PC-3 (cell line): ENCODE measurements at regions of chr3 and their contacts with region 1.

Region 1: GRCh38 chr3:102673271-102674115 is 238.7 kb downstream of the ZPLD1 start:
- DNase-seq: peak; percentile 71
- ATAC-seq: peak; percentile 86
- H3K4me3 ChIP-seq: 0 out of 2 replicates have a peak overlapping the region, but pooled peaks have one; percentile 17
- H3K27ac ChIP-seq: no peak overlapping the region
- H3K4me1 ChIP-seq: no peaks in the 10 kb centered on the region
- H3K27me3 ChIP-seq: peaks cover 25% of the 10 kb centered on the region; the same call in 1 of the 2 replicates
- CTCF ChIP-seq: peak; percentile 96

Region 2: GRCh38 chr3:102586485-102586884 is 87.0 kb before region 1 on chr3:
- CTCF ChIA-PET with region 1: no interaction called
- POLR2A ChIA-PET with region 1: no interaction called
- intact Hi-C with region 1: no loop called
- DNase-seq: no peak
- ATAC-seq: no peak
- H3K4me3 ChIP-seq: no peak overlapping the region
- H3K27ac ChIP-seq: no peak overlapping the region
- H3K4me1 ChIP-seq: no peaks in the 10 kb centered on the region
- H3K27me3 ChIP-seq: peaks cover 43% of the 10 kb centered on the region
- CTCF ChIP-seq: no peak

Region 3: GRCh38 chr3:102741108-102741507 is 67.6 kb after region 1 on chr3:
- CTCF ChIA-PET with region 1: no interaction called
- POLR2A ChIA-PET with region 1: no interaction called
- intact Hi-C with region 1: loop called (anchors 5 kb)
- DNase-seq: peak; percentile 46
- ATAC-seq: peak; percentile 77
- H3K4me3 ChIP-seq: no peak overlapping the region
- H3K27ac ChIP-seq: no peak overlapping the region
- H3K4me1 ChIP-seq: no peaks in the 10 kb centered on the region
- H3K27me3 ChIP-seq: no peaks in the 10 kb centered on the region
- CTCF ChIP-seq: peak; percentile 52

Region 4: DNA sequence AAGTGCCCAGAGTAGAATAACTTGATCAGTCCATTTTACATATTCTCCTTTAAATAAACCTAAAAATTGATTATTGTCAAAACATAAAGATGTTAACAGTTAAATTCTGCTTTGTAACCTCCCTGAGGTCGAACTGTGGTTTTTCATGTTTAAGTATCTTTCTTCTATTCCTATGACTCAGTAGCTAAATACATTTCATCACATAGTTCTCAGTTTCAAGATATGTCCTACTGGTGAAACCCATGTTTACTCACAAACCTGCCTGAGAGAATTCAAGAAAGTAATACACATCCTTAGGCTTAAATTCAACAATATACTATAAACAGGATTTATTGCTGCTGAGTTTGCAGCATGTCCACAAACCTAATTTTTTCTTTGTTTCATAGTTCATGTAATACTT is 454.2 kb after region 1 on chr3:
- CTCF ChIA-PET with region 1: no interaction called
- POLR2A ChIA-PET with region 1: no interaction called
- intact Hi-C with region 1: loop called (anchors 10 kb)
- DNase-seq: peak; percentile 52
- ATAC-seq: peak; percentile 58
- H3K4me3 ChIP-seq: no peak overlapping the region
- H3K27ac ChIP-seq: no peak overlapping the region
- H3K4me1 ChIP-seq: no peaks in the 10 kb centered on the region
- H3K27me3 ChIP-seq: 0 out of 2 replicates have a peak, but pooled peaks cover 3% of the 10 kb centered on the region
- CTCF ChIP-seq: no peak

Region 5: DNA sequence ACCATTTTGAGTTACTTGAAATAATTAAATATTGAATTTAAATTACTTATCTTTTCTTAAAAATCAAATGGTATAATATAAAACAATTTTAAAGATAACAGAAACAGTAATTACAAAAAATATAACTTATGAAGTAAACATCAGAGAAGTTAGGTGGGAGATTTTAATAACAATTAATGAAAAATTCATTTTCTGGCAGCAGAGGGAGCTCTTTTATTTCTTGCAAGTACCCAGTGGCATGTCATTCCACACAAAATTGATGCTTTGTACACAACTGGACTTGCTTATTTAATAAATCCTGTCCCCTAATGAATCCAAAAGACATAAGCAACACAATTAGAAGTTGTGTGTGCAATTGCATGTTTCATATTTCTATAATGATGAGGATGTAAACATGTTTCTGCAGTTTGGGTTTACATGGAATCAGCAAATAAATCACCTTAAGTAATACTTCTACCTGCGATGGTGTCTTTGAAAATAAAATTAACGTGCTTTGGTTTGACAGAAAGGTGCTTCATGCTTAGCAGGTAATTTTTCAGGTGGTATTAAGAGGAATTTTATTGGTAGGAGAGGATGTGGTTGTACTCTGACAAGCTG is 622.6 kb after region 1 on chr3:
- CTCF ChIA-PET with region 1: interaction called, 3 read pairs
- POLR2A ChIA-PET with region 1: no interaction called
- intact Hi-C with region 1: loop called (anchors 10 kb)
- DNase-seq: peak; percentile 50
- ATAC-seq: no peak
- H3K4me3 ChIP-seq: no peak overlapping the region
- H3K27ac ChIP-seq: no peak overlapping the region
- H3K4me1 ChIP-seq: no peaks in the 10 kb centered on the region
- H3K27me3 ChIP-seq: no peaks in the 10 kb centered on the region
- CTCF ChIP-seq: peak; percentile 61